ENCODE measurements at regions of chr16 and their contacts with region 1.

Region 1: DNA sequence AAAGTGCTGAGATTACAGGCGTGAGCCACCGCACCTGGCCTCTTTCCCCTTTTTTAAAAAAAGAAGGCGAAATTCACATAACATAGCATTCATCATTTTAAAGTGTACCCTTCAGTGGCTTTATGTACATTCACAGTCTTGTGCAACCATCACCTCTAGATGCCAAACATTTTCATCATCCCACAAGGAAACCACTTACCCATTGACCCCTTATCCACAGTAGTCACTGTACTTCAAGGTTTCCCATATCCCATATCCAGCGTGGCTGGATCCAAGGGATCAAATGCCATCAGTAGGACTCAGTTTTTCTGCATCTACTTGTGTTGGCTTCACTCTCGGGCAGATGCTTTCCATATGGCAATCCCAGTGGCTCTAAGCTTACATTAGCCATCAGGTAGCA is 50.3 kb downstream of the BMERB1 start:
- DNase-seq: no peak
- ATAC-seq: no peak
- H3K4me3 ChIP-seq: no peak overlapping the region
- H3K27ac ChIP-seq: no peak overlapping the region
- H3K4me1 ChIP-seq: peaks cover 15% of the 10 kb centered on the region
- H3K27me3 ChIP-seq: no peaks in the 10 kb centered on the region
- CTCF ChIP-seq: no peak

Region 2: GRCh38 chr16:15509593-15510535 is 25.2 kb after region 1 on chr16:
- intact Hi-C with region 1: loop called in 1 of 2 experiments (anchors 2 kb)
- DNase-seq: no peak
- ATAC-seq: no peak
- H3K4me3 ChIP-seq: no peak overlapping the region
- H3K27ac ChIP-seq: no peak overlapping the region
- H3K4me1 ChIP-seq: peaks cover 10% of the 10 kb centered on the region
- H3K27me3 ChIP-seq: no peaks in the 10 kb centered on the region
- CTCF ChIP-seq: no peak

Region 3: GRCh38 chr16:15548482-15548891 is 63.8 kb after region 1 on chr16:
- intact Hi-C with region 1: loop called in 1 of 2 experiments (anchors 5 kb)
- DNase-seq: no peak
- ATAC-seq: no peak
- H3K4me3 ChIP-seq: no peak overlapping the region
- H3K27ac ChIP-seq: no peak overlapping the region
- H3K4me1 ChIP-seq: no peaks in the 10 kb centered on the region
- H3K27me3 ChIP-seq: no peaks in the 10 kb centered on the region
- CTCF ChIP-seq: no peak

Measured in psoas muscle (tissue), 8 donors.